ENCODE measurements at regions of chr13 and their contacts with region 1.

Region 1: GRCh38 chr13:23921451-23921888 is 24.2 kb upstream of the C1QTNF9B start:
- DNase-seq: peak; percentile 65
- H3K4me3 ChIP-seq: no peak overlapping the region
- H3K27ac ChIP-seq: peak overlapping the region; percentile 62
- H3K4me1 ChIP-seq: peaks cover 16% of the 10 kb centered on the region
- H3K27me3 ChIP-seq: peaks cover 10 to 12% of the 10 kb centered on the region in 2 experiments
- CTCF ChIP-seq: peak; percentile 58 to 59
- POLR2A ChIP-seq: no peak

Region 2: DNA sequence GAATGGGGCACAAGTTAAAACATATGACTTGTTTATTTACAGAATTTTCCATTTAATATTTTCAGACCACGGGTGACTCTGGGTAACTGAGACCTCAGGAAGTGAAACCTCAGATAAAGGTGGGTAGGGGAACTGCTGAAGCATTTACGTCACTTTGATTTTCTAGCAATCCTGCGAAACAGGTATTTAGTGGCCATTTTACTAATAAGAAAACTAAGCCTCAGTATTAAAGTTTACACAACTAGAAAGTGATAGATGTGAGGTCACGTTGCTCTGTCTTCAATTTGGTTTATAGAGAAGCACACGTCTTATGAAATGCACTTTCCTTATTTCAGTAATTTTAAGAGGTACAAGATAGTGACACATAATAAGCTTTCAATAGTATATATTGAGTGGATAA is 1847.8 kb before region 1 on chr13:
- CTCF ChIA-PET with region 1: no interaction called
- POLR2A ChIA-PET with region 1: no interaction called
- dilution Hi-C with region 1: no loop called
- intact Hi-C with region 1: no loop called
- DNase-seq: no peak
- H3K4me3 ChIP-seq: no peak overlapping the region
- H3K27ac ChIP-seq: no peak overlapping the region
- H3K4me1 ChIP-seq: no peaks in the 10 kb centered on the region
- H3K27me3 ChIP-seq: no peaks in the 10 kb centered on the region
- CTCF ChIP-seq: no peak
- POLR2A ChIP-seq: no peak

Region 3: DNA sequence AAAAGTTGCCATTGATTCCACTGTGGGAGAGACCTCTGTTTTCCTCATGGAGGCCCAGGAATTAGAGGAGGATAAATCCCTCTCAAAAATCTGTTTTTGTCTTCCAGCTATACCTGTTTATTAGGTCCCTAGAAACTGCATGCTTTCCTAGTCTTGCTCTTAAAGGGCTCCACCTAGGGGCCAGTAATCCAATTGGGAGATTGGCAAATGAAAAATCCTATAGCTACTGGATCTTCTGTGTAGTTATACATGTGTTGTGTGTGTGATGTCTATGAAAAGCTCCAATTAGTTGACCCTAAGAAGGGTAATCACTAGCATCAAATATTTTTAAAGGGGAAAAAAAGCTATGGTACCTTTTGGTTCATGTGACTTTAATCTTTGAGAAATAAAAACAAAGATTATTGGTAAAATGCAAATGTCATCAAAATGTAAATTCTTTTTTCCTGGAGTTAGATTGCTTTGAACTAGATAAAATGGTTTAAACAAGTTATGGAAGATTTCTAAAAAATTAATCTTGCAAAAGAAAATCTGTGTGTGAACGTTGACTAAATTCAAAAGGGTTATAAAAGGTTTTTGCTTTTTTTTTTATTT is 39.2 kb after region 1 on chr13:
- CTCF ChIA-PET with region 1: interaction called, 137 read pairs
- POLR2A ChIA-PET with region 1: no interaction called
- dilution Hi-C with region 1: no loop called
- intact Hi-C with region 1: loop called (anchors 1 kb)
- DNase-seq: peak; percentile 52
- H3K4me3 ChIP-seq: no peak overlapping the region
- H3K27ac ChIP-seq: no peak overlapping the region
- H3K4me1 ChIP-seq: no peaks in the 10 kb centered on the region
- H3K27me3 ChIP-seq: peaks cover 0 to 2% of the 10 kb centered on the region in 2 experiments
- CTCF ChIP-seq: peak; percentile 51 to 67
- POLR2A ChIP-seq: no peak

Region 4: GRCh38 chr13:23980160-23980551 is 58.7 kb after region 1 on chr13:
- CTCF ChIA-PET with region 1: interaction called, 4 read pairs
- POLR2A ChIA-PET with region 1: no interaction called
- dilution Hi-C with region 1: no loop called
- intact Hi-C with region 1: loop called (anchors 5 kb)
- DNase-seq: peak; percentile 59
- H3K4me3 ChIP-seq: peak overlapping the region; percentile 41 to 82 (median 57)
- H3K27ac ChIP-seq: peak overlapping the region; percentile 22
- H3K4me1 ChIP-seq: peaks cover 10% of the 10 kb centered on the region
- H3K27me3 ChIP-seq: peaks cover 2 to 4% of the 10 kb centered on the region in 2 experiments
- CTCF ChIP-seq: no peak
- POLR2A ChIP-seq: no peak

Region 5: DNA sequence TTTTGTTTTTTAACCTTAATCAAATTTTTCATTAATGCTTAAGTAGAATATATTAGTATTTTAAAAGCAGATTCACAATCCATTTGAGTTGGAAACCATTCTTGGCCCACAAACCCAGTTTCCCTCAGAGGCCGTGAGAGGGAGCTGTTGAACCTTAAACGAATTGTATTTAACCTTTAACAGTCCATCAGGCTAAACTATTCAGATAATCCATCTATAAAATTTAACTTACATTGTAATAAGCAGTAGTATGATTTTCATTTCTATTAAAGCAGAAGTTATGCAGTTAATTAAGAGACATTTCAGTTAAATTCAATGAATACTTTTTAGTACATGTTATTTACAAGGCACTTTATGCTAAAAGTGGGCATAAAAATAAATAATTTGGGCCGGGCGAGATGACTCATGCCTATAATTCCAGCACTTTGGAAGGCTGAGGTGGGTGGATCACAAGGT is 98.9 kb after region 1 on chr13:
- CTCF ChIA-PET with region 1: interaction called, 16 read pairs
- POLR2A ChIA-PET with region 1: no interaction called
- dilution Hi-C with region 1: no loop called
- intact Hi-C with region 1: no loop called
- DNase-seq: peak; percentile 67
- H3K4me3 ChIP-seq: no peak overlapping the region
- H3K27ac ChIP-seq: no peak overlapping the region
- H3K4me1 ChIP-seq: no peaks in the 10 kb centered on the region
- H3K27me3 ChIP-seq: no peaks in the 10 kb centered on the region
- CTCF ChIP-seq: peak; percentile 62 to 74
- POLR2A ChIP-seq: no peak

Region 6: GRCh38 chr13:24141333-24141910 is 220.0 kb after region 1 on chr13:
- CTCF ChIA-PET with region 1: no interaction called
- POLR2A ChIA-PET with region 1: no interaction called
- dilution Hi-C with region 1: no loop called
- intact Hi-C with region 1: loop called (anchors 5 kb)
- DNase-seq: no peak
- H3K4me3 ChIP-seq: no peak overlapping the region
- H3K27ac ChIP-seq: no peak overlapping the region
- H3K4me1 ChIP-seq: peaks cover 20% of the 10 kb centered on the region
- H3K27me3 ChIP-seq: no peaks in the 10 kb centered on the region
- CTCF ChIP-seq: no peak
- POLR2A ChIP-seq: no peak

Region 7: GRCh38 chr13:24220086-24220703 is 298.7 kb after region 1 on chr13:
- CTCF ChIA-PET with region 1: interaction called, 7 read pairs
- POLR2A ChIA-PET with region 1: no interaction called
- dilution Hi-C with region 1: no loop called
- intact Hi-C with region 1: loop called (anchors 1 kb)
- DNase-seq: peak; percentile 77
- H3K4me3 ChIP-seq: no peak overlapping the region
- H3K27ac ChIP-seq: no peak overlapping the region
- H3K4me1 ChIP-seq: peaks cover 10% of the 10 kb centered on the region
- H3K27me3 ChIP-seq: no peaks in the 10 kb centered on the region
- CTCF ChIP-seq: peak; percentile 60 to 62
- POLR2A ChIP-seq: no peak

Region 8: DNA sequence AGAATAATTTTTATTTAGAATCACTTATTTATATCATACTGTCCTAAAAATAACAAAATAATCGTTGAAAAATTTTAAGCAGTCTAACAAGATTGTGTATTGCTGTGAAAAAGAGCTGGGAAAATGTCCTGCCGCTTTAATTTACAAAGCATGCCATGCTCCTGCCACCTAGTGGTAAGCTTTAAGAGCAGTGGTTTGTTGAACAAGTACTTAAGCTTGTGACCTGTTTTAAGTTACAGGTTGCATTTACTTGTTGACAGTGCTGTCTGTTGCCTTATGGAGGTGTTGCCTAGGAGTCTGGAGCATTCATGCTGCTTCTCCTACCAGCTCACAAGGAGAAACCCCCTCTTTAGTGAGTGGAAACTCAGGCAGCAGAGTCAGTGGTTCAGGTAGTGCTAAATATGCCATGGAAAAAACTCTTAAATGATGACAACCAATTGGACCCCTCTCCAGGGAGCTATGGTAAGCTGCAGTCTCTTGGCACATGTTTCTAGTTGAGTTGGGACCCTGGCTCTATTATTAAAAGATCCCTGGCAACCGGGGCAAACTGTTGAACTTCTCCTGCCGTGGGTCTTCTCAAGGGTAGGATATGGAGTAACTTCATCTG is 307.5 kb after region 1 on chr13:
- CTCF ChIA-PET with region 1: interaction called, 47 read pairs
- POLR2A ChIA-PET with region 1: no interaction called
- dilution Hi-C with region 1: no loop called
- intact Hi-C with region 1: loop called (anchors 2 kb)
- DNase-seq: peak; percentile 67
- H3K4me3 ChIP-seq: no peak overlapping the region
- H3K27ac ChIP-seq: no peak overlapping the region
- H3K4me1 ChIP-seq: peaks cover 5% of the 10 kb centered on the region
- H3K27me3 ChIP-seq: no peaks in the 10 kb centered on the region
- CTCF ChIP-seq: peak; percentile 78 to 82
- POLR2A ChIP-seq: no peak

Measured in endothelial cell of umbilical vein (primary cell).